ENCODE measurements at regions of chr10 and their contacts with region 1.

Region 1: GRCh38 chr10:31318854-31319601 is at the start of gene ZEB1:
- DNase-seq: peak; percentile 95
- ATAC-seq: peak; percentile 54
- H3K4me3 ChIP-seq: peak within 1 kb of the TSS; percentile 63 to 95 (median 89)
- H3K4me3 Mint-ChIP-seq: peak within 1 kb of the TSS; percentile 96
- H3K27ac ChIP-seq: peak within 1 kb of the TSS; percentile 89 to 97
- H3K27ac Mint-ChIP-seq: peak within 1 kb of the TSS; percentile 98
- H3K4me1 ChIP-seq: peaks cover 13 to 16% of the 10 kb centered on the region in 2 donors
- H3K4me1 Mint-ChIP-seq: peaks cover 36% of the 10 kb centered on the region
- H3K27me3 ChIP-seq: no peaks in the 10 kb centered on the region
- H3K27me3 Mint-ChIP-seq: no peaks in the 10 kb centered on the region
- CTCF ChIP-seq: peak; percentile 29
- total RNA-seq, gene ZEB1: 96.7 and 107 TPM in 2 replicates

Region 2: DNA sequence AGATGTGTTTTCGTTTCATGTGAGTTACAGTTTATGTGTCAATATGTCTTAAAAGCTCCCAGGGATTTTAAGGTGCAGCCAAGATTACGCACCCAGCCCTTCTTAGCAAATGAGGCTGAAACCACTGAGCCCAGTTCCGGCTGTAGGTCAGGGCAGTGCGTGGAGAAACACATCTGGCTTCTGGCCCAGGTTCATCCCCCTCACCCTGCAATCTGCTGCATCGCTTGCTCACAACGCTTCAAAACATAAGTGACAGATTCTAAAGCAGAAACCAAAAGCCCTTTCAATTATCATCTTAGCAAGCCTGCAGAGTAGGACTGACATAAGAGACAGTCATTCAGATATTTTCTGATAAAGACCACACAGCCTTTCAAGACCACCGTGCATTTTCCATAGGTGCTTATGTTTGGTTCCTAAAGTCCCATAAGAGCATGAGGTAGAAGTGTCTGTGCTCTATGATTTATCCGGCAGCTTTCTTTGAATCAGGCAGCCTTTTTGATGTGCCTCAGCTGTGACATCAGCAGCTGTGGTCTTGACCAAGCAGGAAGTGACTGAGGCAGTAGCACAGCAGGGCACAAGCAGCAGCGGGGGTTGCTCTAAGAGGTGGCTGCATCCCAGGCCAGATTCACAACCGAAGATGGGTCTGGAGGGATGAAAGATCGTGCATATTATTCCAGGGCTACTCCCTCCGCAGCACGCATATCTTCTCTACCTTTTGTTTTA is 617.4 kb before region 1 on chr10:
- CTCF ChIA-PET with region 1: no interaction called
- POLR2A ChIA-PET with region 1: no interaction called
- intact Hi-C with region 1: loop called (anchors 10 kb)
- DNase-seq: peak; percentile 57
- ATAC-seq: peak; percentile 52
- H3K4me3 ChIP-seq: peak overlapping the region in 4 of 5 experiments; percentile 1 to 44 (median 26)
- H3K4me3 Mint-ChIP-seq: peak overlapping the region; percentile 89
- H3K27ac ChIP-seq: peak overlapping the region; percentile 66 to 76
- H3K27ac Mint-ChIP-seq: peak overlapping the region; percentile 96
- H3K4me1 ChIP-seq: peaks cover 49% of the 10 kb centered on the region in 2 donors
- H3K4me1 Mint-ChIP-seq: peaks cover 59% of the 10 kb centered on the region
- H3K27me3 ChIP-seq: no peaks in the 10 kb centered on the region
- H3K27me3 Mint-ChIP-seq: no peaks in the 10 kb centered on the region
- CTCF ChIP-seq: no peak

Region 3: DNA sequence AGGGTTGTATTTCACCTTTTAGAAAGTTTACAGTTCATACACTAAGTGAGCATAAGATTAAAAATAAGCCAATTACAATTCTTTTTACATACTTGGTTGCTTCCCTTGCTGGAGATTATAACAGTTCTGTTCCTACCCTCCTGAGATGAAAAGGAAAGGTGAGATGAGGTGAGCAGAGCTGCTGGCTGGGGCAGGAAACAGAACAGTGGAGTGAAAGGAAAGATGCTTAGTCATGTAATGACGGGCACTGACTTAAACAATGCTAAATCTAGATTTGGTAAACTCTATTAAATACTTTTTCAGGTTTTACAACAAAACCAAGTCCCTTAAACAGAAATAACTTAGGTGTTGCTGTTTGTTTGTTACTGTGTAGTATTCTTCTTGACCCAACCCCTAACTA is 19.9 kb before region 1 on chr10:
- CTCF ChIA-PET with region 1: no interaction called
- POLR2A ChIA-PET with region 1: no interaction called
- intact Hi-C with region 1: no loop called
- DNase-seq: no peak
- ATAC-seq: no peak
- H3K4me3 ChIP-seq: no peak overlapping the region
- H3K4me3 Mint-ChIP-seq: no peak overlapping the region
- H3K27ac ChIP-seq: no peak overlapping the region
- H3K27ac Mint-ChIP-seq: no peak overlapping the region
- H3K4me1 ChIP-seq: no peaks in the 10 kb centered on the region
- H3K4me1 Mint-ChIP-seq: no peaks in the 10 kb centered on the region
- H3K27me3 ChIP-seq: no peaks in the 10 kb centered on the region
- H3K27me3 Mint-ChIP-seq: peaks cover 3% of the 10 kb centered on the region
- CTCF ChIP-seq: no peak

Region 4: DNA sequence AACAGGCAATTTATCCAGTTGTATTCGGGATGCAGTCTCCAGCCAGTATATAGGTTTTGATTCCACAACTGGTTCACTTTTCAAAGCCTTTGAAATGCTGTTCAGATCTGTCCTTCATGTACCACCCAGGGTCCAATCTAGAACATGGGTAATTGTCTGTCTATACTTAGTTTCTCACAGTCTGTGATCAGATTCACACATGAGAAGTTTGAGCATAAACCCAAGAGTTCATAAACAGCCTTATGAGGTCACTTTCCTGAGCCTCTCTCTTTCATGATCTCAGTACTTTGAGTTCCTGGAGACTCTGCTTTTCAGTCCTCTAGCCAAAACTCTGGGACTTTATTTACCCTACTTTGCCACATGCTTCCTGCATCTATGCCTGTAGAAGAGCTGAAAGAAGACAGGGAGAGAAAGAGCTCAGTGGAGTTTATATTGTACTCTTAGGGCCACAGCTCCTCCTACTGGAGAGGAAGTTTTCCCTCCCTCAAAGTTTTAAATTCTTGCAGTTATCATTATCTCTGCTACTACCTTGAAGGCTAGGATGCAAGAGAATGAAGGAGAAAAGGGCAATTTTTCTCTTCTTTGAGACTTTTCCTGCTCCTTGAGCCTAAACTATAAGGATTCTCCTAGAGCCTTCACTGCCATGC is 172.0 kb after region 1 on chr10:
- CTCF ChIA-PET with region 1: no interaction called
- POLR2A ChIA-PET with region 1: no interaction called
- intact Hi-C with region 1: no loop called
- DNase-seq: peak; percentile 40
- ATAC-seq: no peak
- H3K4me3 ChIP-seq: no peak overlapping the region
- H3K4me3 Mint-ChIP-seq: no peak overlapping the region
- H3K27ac ChIP-seq: no peak overlapping the region
- H3K27ac Mint-ChIP-seq: no peak overlapping the region
- H3K4me1 ChIP-seq: no peaks in the 10 kb centered on the region
- H3K4me1 Mint-ChIP-seq: no peaks in the 10 kb centered on the region
- H3K27me3 ChIP-seq: no peaks in the 10 kb centered on the region
- H3K27me3 Mint-ChIP-seq: no peaks in the 10 kb centered on the region
- CTCF ChIP-seq: peak; percentile 51

Region 5: GRCh38 chr10:31707093-31708039 is 388.3 kb after region 1 on chr10:
- CTCF ChIA-PET with region 1: no interaction called
- POLR2A ChIA-PET with region 1: no interaction called
- intact Hi-C with region 1: loop called (anchors 5 kb)
- DNase-seq: peak; percentile 47
- ATAC-seq: peak; percentile 81
- H3K4me3 ChIP-seq: peak overlapping the region in 3 of 5 experiments; percentile 16 to 57 (median 29)
- H3K4me3 Mint-ChIP-seq: peak overlapping the region; percentile 73
- H3K27ac ChIP-seq: peak overlapping the region; percentile 45 to 81
- H3K27ac Mint-ChIP-seq: peak overlapping the region; percentile 70
- H3K4me1 ChIP-seq: peaks cover 29 to 30% of the 10 kb centered on the region in 2 donors
- H3K4me1 Mint-ChIP-seq: peaks cover 40% of the 10 kb centered on the region
- H3K27me3 ChIP-seq: no peaks in the 10 kb centered on the region
- H3K27me3 Mint-ChIP-seq: no peaks in the 10 kb centered on the region
- CTCF ChIP-seq: no peak

Region 6: GRCh38 chr10:32055813-32056600 is 737.0 kb after region 1 on chr10 and contains the start of gene KIF5B:
- CTCF ChIA-PET with region 1: no interaction called
- POLR2A ChIA-PET with region 1: no interaction called
- intact Hi-C with region 1: loop called (anchors 2 kb)
- DNase-seq: peak; percentile 93
- ATAC-seq: peak; percentile 85
- H3K4me3 ChIP-seq: peak within 1 kb of the TSS; percentile 64 to 97 (median 85)
- H3K4me3 Mint-ChIP-seq: peak within 1 kb of the TSS; percentile 98
- H3K27ac ChIP-seq: peak within 1 kb of the TSS; percentile 80 to 90
- H3K27ac Mint-ChIP-seq: peak within 1 kb of the TSS; percentile 97
- H3K4me1 ChIP-seq: peaks cover 31 to 47% of the 10 kb centered on the region in 2 donors
- H3K4me1 Mint-ChIP-seq: peaks cover 53% of the 10 kb centered on the region
- H3K27me3 ChIP-seq: no peaks in the 10 kb centered on the region
- H3K27me3 Mint-ChIP-seq: no peaks in the 10 kb centered on the region
- CTCF ChIP-seq: no peak
- total RNA-seq, gene KIF5B: 40.1 and 44.1 TPM in 2 replicates